Left lung (tissue), 14 donors: ENCODE measurements at regions of chr14 and their contacts with region 1.

Region 1: GRCh38 chr14:68816262-68816942 is 23.5 kb upstream of the ZFP36L1 start:
- DNase-seq: peak; percentile 92 to 99 (median 94)
- ATAC-seq: peak; percentile 92
- H3K4me3 ChIP-seq: peak overlapping the region; percentile 43 to 47
- H3K27ac ChIP-seq: peak overlapping the region; percentile 99 to 100
- H3K4me1 ChIP-seq: peaks cover 35 to 47% of the 10 kb centered on the region in 2 donors
- H3K27me3 ChIP-seq: no peaks in the 10 kb centered on the region
- CTCF ChIP-seq: peak; percentile 97 to 98

Region 2: GRCh38 chr14:67943947-67944346 is 872.5 kb before region 1 on chr14:
- intact Hi-C with region 1: loop called in 1 of 2 experiments (anchors 5 kb)
- DNase-seq: peak in 3 of 4 donors; percentile 67 to 95 (median 89)
- ATAC-seq: peak; percentile 79
- H3K4me3 ChIP-seq: no peak overlapping the region
- H3K27ac ChIP-seq: peak overlapping the region in 1 of 2 donors; percentile 61
- H3K4me1 ChIP-seq: peaks cover 37 to 45% of the 10 kb centered on the region in 2 donors
- H3K27me3 ChIP-seq: no peaks in the 10 kb centered on the region
- CTCF ChIP-seq: peak; percentile 49 to 67

Region 3: DNA sequence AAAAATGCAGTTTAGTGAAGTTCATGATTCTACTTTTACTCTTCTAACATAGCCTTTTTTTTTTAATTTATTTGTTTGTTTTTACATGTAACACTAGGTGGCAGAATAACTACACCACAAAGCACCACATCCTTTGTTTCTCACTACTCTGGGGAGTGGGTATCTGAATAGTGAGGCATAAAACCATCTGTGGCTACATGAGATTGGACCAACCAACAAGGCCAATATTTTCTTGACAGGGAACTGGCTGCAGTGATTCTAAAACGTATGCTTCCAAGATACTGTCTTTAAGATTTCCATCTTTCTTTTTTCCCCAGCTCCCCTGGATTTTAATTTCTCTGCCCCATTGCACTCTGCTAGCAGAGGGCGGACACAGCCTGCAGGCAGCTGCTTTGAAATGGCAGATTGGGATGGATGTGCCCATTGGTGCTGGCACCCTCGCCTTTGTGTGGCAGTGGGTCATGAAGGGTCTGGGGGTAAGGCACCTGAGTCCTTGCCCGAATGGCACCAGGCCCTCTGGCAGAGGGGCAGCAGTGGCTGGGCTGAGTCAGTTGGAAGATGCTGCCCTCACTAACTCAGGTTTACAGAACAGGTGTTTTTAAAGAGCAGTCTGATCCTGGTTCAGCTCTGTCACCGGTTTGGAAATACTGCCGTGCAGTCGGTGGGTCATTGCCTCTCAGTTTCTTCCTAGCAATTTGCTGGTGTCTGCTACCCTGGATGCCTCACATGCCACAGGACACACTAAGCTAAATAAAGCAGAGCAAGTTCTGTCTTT is 567.7 kb before region 1 on chr14:
- intact Hi-C with region 1: loop called in 1 of 2 experiments (anchors 10 kb)
- DNase-seq: peak; percentile 38 to 87 (median 64)
- ATAC-seq: peak; percentile 78
- H3K4me3 ChIP-seq: no peak overlapping the region
- H3K27ac ChIP-seq: peak overlapping the region; percentile 68 to 87
- H3K4me1 ChIP-seq: peaks cover 44 to 66% of the 10 kb centered on the region in 2 donors
- H3K27me3 ChIP-seq: no peaks in the 10 kb centered on the region
- CTCF ChIP-seq: peak in 1 of 2 donors; percentile 42

Region 4: GRCh38 chr14:69090187-69090789 is 273.9 kb after region 1 on chr14:
- intact Hi-C with region 1: no loop called
- DNase-seq: peak in 1 of 4 donors; percentile 43
- ATAC-seq: peak; percentile 51
- H3K4me3 ChIP-seq: no peak overlapping the region
- H3K27ac ChIP-seq: no peak overlapping the region
- H3K4me1 ChIP-seq: peaks cover 0 to 44% of the 10 kb centered on the region in 2 donors
- H3K27me3 ChIP-seq: no peaks in the 10 kb centered on the region
- CTCF ChIP-seq: peak; percentile 59 to 70